Activated CD4-positive, alpha-beta T cell treated with anti-CD3 and anti-CD28 coated beads for 36 hours (primary cell): ENCODE measurements at regions of chr6 and their contacts with region 1.

Region 1: GRCh38 chr6:11732036-11732631 is 46.5 kb downstream of the ADTRP start:
- DNase-seq: peak; percentile 84
- ATAC-seq: peak; percentile 58
- H3K4me3 Mint-ChIP-seq: peak overlapping the region; percentile 22
- H3K27ac Mint-ChIP-seq: peak overlapping the region; percentile 90
- H3K4me1 Mint-ChIP-seq: peaks cover 62% of the 10 kb centered on the region
- H3K27me3 Mint-ChIP-seq: peaks cover 2% of the 10 kb centered on the region

Region 2: DNA sequence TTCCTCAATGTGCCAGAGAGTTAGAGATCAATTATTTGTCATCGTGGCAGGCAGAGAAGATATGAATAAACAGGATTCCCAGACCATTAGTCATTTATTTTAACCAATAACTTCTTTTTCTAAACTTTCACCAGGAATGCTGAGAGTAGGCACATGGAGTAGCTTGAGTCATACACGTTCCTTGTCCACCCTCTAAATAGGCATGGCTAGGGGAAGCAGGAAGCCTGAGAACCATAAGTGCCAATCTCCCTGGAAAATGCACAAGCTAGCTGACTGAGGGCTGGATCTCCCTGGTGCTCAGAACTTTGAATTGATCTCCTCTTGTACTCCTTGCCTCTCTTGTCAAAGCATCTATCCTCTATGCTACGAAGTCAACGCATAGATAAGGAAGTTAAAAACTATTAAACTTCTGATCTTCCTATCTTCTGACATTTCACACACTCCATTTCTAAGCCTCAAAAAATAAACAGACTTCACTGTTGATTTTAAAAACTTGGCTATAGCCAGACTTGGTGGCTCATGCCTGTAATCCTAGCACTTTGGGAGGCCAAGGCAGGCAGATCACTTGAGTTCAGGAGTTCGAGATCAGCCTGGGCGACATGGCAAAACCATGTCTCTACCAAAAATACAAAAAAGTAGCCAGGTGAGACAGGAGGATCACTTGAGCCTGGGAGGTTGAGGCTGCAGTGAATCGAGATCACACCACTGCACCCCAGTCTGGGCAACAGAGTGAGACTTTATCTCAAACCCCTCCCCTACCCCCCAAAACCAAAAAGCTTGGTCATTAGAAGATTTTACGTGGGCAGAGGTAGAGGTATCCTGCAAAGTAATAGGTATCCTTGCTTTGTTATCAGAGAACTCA is 34.7 kb after region 1 on chr6:
- CTCF ChIA-PET with region 1: interaction called, 3 read pairs
- POLR2A ChIA-PET with region 1: interaction called, 3 read pairs
- intact Hi-C with region 1: loop called in 1 of 2 experiments (anchors 2 kb)
- DNase-seq: no peak
- ATAC-seq: no peak
- H3K4me3 Mint-ChIP-seq: no peak overlapping the region
- H3K27ac Mint-ChIP-seq: no peak overlapping the region
- H3K4me1 Mint-ChIP-seq: peaks cover 39% of the 10 kb centered on the region
- H3K27me3 Mint-ChIP-seq: no peaks in the 10 kb centered on the region

Region 3: DNA sequence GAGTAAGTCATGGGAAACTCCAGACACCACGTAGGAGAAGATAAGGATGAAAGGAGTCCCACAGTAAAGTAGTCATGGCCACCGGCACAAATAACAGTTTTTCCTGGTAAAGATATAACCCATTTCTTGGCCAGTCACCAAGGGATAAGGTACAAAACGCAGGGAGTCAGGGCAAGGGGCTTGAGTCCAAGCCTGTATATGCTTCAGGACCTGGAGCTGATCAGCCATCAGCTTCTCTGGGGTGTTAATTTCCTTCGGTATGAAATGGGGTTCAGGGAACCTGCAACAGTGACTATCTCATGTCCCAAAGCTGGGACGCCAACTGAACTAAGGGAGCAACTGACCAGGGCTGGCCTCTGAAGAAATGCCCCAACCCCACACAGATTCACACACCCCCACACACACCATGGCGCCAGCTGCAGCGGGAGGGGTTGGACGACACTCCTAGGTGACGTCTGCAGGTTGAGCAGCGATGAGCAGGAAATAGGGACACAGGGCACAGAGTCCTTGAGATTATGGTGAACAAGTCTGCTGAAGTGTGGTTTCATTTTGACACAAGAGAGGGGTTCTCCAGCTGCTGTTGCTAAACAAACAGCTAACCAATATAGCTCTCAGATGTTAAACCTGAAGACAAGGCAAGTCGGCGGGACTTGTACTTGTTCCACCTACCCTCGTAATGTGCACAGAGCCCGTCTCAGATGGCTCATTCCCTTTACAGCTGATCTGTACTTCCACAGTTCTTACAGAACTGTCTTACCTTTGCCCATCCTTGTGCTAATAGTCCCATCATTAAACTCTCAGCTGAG is 53.8 kb after region 1 on chr6:
- CTCF ChIA-PET with region 1: interaction called, 3 read pairs
- POLR2A ChIA-PET with region 1: interaction called, 3 read pairs
- intact Hi-C with region 1: loop called in 1 of 2 experiments (anchors 1 kb)
- DNase-seq: peak; percentile 68
- ATAC-seq: peak; percentile 89
- H3K4me3 Mint-ChIP-seq: peak overlapping the region; percentile 55
- H3K27ac Mint-ChIP-seq: peak overlapping the region; percentile 52
- H3K4me1 Mint-ChIP-seq: peaks cover 11% of the 10 kb centered on the region
- H3K27me3 Mint-ChIP-seq: no peaks in the 10 kb centered on the region